CD8-positive, alpha-beta memory T cell (primary cell): ENCODE measurements at regions of chr19 and their contacts with region 1.

Region 1: DNA sequence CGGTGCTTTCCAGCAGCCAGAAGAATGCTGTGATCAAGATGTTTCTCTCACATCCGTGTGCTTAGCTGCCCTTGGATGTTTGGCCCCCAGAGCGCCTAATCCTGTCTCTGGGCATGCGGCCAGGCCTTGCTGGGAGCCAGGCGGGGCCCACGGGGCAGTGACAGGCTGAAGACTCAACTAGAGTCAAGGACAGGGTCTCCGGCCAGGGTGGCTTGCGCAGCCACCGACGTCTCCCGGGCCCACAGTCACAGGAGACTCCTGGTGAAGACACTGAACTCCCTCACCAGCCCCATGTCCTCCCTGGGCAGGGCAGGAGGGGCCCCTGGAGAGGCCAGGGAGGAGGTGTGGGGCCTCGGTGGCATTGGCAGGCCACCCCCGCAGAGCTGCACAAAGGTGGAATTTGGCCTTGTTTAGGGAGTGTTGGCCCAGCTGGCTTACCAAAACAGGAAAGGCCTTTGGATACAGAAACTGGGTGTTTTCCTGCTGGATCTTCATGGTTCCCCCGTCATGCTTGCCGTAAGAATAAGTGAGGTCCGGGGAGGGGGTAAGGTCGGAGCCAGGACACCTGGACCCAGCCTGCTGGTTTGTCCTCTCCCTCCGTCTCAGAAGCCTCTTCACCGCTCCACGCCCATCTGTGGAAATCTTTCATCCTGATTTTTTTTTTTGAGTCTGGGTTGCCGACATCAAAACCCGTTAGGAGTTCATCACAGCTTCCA is 10.0 kb upstream of the NDUFS7 start:
- DNase-seq: no peak
- H3K4me3 ChIP-seq: no peak overlapping the region
- H3K4me3 Mint-ChIP-seq: no peak overlapping the region
- H3K27ac ChIP-seq: no peak overlapping the region
- H3K27ac Mint-ChIP-seq: no peak overlapping the region
- H3K4me1 ChIP-seq: no peaks in the 10 kb centered on the region
- H3K4me1 Mint-ChIP-seq: no peaks in the 10 kb centered on the region
- H3K27me3 ChIP-seq: no peaks in the 10 kb centered on the region
- H3K27me3 Mint-ChIP-seq: no peaks in the 10 kb centered on the region

Region 2: DNA sequence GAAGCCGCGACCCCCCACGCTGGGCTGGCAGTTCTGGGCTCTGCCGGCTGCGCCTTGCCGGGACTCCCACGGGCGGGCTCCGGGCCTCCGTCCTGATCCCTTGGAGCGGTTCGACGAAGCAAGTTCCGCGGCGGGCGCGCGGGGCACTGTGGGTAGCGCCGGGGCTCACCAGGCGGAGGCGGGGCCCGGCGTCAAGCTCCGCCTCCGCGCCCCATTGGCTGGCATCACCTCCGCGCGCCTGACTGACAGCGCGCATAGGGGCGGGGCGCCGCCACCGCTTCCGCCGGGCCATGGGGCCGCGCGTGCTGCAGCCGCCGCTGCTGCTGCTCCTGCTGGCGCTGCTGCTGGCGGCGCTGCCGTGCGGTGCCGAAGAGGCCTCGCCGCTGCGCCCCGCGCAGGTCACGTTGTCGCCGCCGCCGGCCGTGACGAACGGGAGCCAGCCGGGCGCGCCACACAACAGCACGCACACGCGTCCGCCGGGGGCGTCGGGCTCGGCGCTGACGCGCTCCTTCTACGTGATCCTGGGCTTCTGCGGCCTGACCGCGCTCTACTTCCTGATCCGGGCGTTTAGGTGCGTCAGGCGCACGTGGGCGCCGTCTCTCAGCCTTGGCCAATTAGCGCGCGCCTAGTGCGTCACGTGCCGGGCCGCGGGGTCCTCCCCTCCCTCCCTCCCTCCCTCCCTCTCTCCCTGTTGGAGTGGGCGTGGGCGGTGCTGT is 98.3 kb before region 1 on chr19 and contains the start of gene FAM174C:
- CTCF ChIA-PET with region 1: interaction called, 16 read pairs
- POLR2A ChIA-PET with region 1: no interaction called
- DNase-seq: peak; percentile 96 to 99 (median 97)
- H3K4me3 ChIP-seq: peak within 1 kb of the TSS; percentile 74
- H3K4me3 Mint-ChIP-seq: peak within 1 kb of the TSS; percentile 79 to 87 (median 84)
- H3K27ac ChIP-seq: peak within 1 kb of the TSS; percentile 92
- H3K27ac Mint-ChIP-seq: peak within 1 kb of the TSS; percentile 78 to 98 (median 93)
- H3K4me1 ChIP-seq: peaks cover 61% of the 10 kb centered on the region
- H3K4me1 Mint-ChIP-seq: peaks cover 48 to 61% (median 50%) of the 10 kb centered on the region in 3 donors
- H3K27me3 ChIP-seq: no peaks in the 10 kb centered on the region
- H3K27me3 Mint-ChIP-seq: peaks cover 0 to 6% of the 10 kb centered on the region in 2 donors
- total RNA-seq, gene FAM174C: 113 TPM

Region 3: GRCh38 chr19:1429750-1430149 is 56.1 kb after region 1 on chr19:
- CTCF ChIA-PET with region 1: no interaction called
- POLR2A ChIA-PET with region 1: no interaction called
- DNase-seq: no peak
- H3K4me3 ChIP-seq: no peak overlapping the region
- H3K4me3 Mint-ChIP-seq: no peak overlapping the region
- H3K27ac ChIP-seq: no peak overlapping the region
- H3K27ac Mint-ChIP-seq: no peak overlapping the region
- H3K4me1 ChIP-seq: no peaks in the 10 kb centered on the region
- H3K4me1 Mint-ChIP-seq: peaks cover 0 to 3% (median 0%) of the 10 kb centered on the region in 3 donors
- H3K27me3 ChIP-seq: no peaks in the 10 kb centered on the region
- H3K27me3 Mint-ChIP-seq: no peaks in the 10 kb centered on the region